ENCODE measurements at regions of chr9 and their contacts with region 1.

Region 1: DNA sequence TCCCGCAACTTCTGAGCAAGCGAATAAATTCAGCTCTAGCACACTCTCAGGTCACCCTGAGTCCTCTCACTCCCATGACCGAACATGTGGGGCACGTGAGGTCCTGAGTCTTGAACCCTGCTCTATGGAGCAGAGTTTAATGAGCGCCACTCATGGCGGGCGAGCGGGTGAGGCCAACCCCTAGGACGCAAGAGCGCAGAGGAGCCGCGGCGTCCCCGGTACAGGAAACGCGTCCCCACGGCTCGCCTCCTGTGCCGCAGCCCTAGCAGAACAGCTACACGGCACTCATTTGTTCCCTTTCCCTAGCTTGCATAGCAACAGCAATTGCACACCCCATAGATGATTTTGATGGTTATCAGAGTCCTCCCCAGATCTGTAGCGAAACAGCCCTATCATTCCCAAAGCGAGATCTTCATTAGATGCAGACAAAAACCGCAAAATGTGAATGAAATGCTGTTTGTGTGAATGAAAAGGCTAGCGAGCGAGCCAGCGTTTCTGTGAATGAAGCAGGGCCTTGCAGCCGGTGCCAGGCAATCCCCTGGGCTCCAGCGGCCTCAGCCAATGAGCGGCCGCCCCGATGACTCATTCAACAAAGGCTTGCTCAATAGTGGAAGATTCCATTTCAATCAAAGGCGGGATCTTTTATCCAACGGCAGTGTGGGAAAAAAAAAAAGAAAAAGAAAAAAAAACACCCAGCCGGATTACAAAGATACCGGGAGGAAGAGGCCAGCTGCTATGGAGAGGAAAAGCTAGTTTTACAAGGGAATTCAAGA is 1.5 kb upstream of the SHC3 start:
- DNase-seq: peak in 4 of 9 donors; percentile 7 to 32 (median 11)
- ATAC-seq: peak; percentile 53
- H3K4me3 ChIP-seq: peak overlapping the region; percentile 35
- H3K4me3 Mint-ChIP-seq: peak overlapping the region; percentile 12 to 83 (median 64)
- H3K27ac ChIP-seq: no peak overlapping the region
- H3K27ac Mint-ChIP-seq: no peak overlapping the region
- H3K4me1 ChIP-seq: peaks cover 0 to 12% of the 10 kb centered on the region in 2 donors
- H3K4me1 Mint-ChIP-seq: peaks cover 9 to 27% (median 19%) of the 10 kb centered on the region in 7 donors
- H3K27me3 ChIP-seq: peaks cover 3 to 6% of the 10 kb centered on the region in 2 donors
- H3K27me3 Mint-ChIP-seq: peaks cover 49 to 73% (median 65%) of the 10 kb centered on the region in 5 donors

Region 2: GRCh38 chr9:89278997-89279739 is 99.1 kb after region 1 on chr9:
- CTCF ChIA-PET with region 1: no interaction called
- POLR2A ChIA-PET with region 1: no interaction called
- intact Hi-C with region 1: loop called in 1 of 2 experiments (anchors 5 kb)
- DNase-seq: peak in 5 of 9 donors; percentile 16 to 36 (median 25)
- ATAC-seq: peak; percentile 63
- H3K4me3 ChIP-seq: no peak overlapping the region
- H3K4me3 Mint-ChIP-seq: no peak overlapping the region
- H3K27ac ChIP-seq: no peak overlapping the region
- H3K27ac Mint-ChIP-seq: no peak overlapping the region
- H3K4me1 ChIP-seq: peaks cover 8 to 11% of the 10 kb centered on the region in 2 donors
- H3K4me1 Mint-ChIP-seq: peaks cover 14 to 26% (median 24%) of the 10 kb centered on the region in 7 donors
- H3K27me3 ChIP-seq: no peaks in the 10 kb centered on the region
- H3K27me3 Mint-ChIP-seq: peaks cover 0 to 11% (median 0%) of the 10 kb centered on the region in 5 donors